Right ventricle myocardium inferior (tissue), 1 donor: ENCODE measurements at regions of chr4 and their contacts with region 1.

Region 1: DNA sequence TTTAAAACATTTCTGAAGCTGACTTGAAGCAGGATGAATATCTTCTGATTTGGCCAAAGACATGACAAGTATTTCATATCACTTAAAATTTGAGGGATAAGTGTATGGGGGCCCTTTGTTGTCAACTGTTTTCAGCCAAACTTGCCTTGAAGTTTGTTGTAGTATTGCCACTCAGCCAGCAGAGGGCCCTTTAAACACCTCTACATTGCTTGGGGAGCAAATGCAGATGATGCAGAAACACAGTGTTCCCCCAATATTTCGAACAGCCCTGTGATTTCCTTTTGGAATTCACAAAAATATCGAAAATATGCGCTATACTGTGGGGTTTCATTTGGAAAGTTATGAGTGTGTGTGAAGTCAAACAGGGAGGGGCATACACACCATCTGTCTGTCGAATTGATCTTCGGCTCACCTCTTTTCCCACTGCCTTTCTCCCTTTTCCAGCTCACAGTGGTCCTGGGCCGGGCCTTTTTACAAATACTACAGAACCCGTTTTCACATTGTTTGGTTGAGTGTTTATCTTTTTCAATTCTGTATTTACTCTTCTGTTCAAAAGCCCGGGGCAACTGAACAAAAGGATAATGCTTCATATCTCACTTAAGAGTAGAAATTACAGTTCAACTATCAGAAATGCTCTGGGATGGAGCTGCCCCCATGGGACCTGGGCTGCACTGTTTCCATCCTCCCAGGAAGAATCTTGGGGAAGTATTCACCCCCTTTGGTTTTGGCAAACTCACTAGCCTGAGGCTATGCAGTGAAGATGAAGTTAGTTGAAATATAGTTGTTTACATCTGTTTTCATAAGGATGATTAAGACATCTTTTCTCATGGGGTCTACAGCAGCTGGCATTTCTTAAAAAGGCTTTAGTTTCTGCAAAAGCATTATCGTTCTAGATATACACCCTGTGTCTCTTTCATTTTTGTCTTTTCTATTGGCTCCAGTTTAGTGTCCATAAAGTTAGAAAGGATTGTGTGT is 137.6 kb downstream of the EGF start:
- DNase-seq: no peak
- ATAC-seq: peak; percentile 28

Region 2: GRCh38 chr4:109959195-109959594 is 91.0 kb before region 1 on chr4:
- intact Hi-C with region 1: no loop called
- DNase-seq: no peak
- ATAC-seq: no peak

Region 3: GRCh38 chr4:110211007-110211769 is 160.9 kb after region 1 on chr4:
- intact Hi-C with region 1: loop called (anchors 5 kb)
- DNase-seq: no peak
- ATAC-seq: no peak